ENCODE measurements at regions of chr11 and their contacts with region 1.

Region 1: GRCh38 chr11:57644748-57645688 is 4.7 kb downstream of the YPEL4 start:
- DNase-seq: peak; percentile 90
- ATAC-seq: peak; percentile 83
- H3K4me3 Mint-ChIP-seq: no peak overlapping the region
- H3K27ac Mint-ChIP-seq: no peak overlapping the region
- H3K4me1 Mint-ChIP-seq: peaks cover 33% of the 10 kb centered on the region
- H3K27me3 Mint-ChIP-seq: peaks cover 64% of the 10 kb centered on the region

Region 2: GRCh38 chr11:57546869-57547475 is 98.0 kb before region 1 on chr11:
- CTCF ChIA-PET with region 1: interaction called, 10 read pairs
- DNase-seq: no peak
- ATAC-seq: peak; percentile 61
- H3K4me3 Mint-ChIP-seq: no peak overlapping the region
- H3K27ac Mint-ChIP-seq: peak overlapping the region; percentile 22
- H3K4me1 Mint-ChIP-seq: peaks cover 20% of the 10 kb centered on the region
- H3K27me3 Mint-ChIP-seq: no peaks in the 10 kb centered on the region

Region 3: DNA sequence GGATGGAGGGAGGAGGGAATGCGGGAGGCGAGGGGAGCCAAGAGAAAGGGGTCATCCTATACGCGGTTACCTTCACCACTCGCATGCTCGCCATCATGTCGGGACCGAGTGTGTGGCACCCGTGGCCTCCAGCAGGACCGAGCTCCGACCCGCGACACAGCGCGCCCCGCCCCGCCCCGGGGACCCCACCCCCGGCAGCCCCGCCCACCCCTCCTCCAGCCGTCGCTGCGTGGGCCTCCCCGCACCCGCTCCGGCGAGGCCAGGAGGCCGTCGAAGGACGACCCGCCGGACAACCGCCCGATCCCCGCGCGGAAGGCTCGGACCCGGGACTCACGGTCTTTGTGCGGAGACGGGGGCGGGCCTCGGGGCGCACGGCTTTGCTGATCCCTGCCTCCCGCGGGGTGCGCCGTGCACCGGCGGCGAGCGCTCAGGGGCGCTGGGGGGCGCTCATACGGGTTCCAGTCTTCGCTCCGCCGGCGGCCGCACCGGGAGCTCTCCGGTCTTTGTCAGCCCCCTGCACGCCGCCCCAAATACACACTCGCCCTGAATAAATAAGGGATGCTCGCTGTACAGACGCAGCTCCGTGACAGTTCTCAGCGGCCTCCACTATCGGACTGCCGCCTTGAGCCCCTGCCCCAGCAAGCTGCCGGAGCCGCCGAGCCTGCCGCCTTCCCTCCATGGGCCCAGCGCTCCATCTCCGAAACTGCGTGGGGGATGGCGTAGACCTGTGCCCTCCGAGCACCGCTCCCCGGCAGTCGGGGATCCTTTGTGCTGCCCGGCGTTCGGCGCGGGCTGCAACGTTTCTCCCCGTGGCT is 77.3 kb before region 1 on chr11 and contains the start of gene UBE2L6:
- CTCF ChIA-PET with region 1: interaction called, 267 read pairs
- DNase-seq: peak; percentile 77
- ATAC-seq: peak; percentile 79
- H3K4me3 Mint-ChIP-seq: peak within 1 kb of the TSS; percentile 100
- H3K27ac Mint-ChIP-seq: peak within 1 kb of the TSS; percentile 98
- H3K4me1 Mint-ChIP-seq: peaks cover 30% of the 10 kb centered on the region
- H3K27me3 Mint-ChIP-seq: no peaks in the 10 kb centered on the region
- total RNA-seq, gene UBE2L6: 245 to 317 TPM

Region 4: GRCh38 chr11:57604296-57605027 is 40.6 kb before region 1 on chr11:
- CTCF ChIA-PET with region 1: interaction called, 12 read pairs
- DNase-seq: peak; percentile 44
- ATAC-seq: no peak
- H3K4me3 Mint-ChIP-seq: no peak overlapping the region
- H3K27ac Mint-ChIP-seq: no peak overlapping the region
- H3K4me1 Mint-ChIP-seq: peaks cover 5% of the 10 kb centered on the region
- H3K27me3 Mint-ChIP-seq: peaks cover 34% of the 10 kb centered on the region

Region 5: DNA sequence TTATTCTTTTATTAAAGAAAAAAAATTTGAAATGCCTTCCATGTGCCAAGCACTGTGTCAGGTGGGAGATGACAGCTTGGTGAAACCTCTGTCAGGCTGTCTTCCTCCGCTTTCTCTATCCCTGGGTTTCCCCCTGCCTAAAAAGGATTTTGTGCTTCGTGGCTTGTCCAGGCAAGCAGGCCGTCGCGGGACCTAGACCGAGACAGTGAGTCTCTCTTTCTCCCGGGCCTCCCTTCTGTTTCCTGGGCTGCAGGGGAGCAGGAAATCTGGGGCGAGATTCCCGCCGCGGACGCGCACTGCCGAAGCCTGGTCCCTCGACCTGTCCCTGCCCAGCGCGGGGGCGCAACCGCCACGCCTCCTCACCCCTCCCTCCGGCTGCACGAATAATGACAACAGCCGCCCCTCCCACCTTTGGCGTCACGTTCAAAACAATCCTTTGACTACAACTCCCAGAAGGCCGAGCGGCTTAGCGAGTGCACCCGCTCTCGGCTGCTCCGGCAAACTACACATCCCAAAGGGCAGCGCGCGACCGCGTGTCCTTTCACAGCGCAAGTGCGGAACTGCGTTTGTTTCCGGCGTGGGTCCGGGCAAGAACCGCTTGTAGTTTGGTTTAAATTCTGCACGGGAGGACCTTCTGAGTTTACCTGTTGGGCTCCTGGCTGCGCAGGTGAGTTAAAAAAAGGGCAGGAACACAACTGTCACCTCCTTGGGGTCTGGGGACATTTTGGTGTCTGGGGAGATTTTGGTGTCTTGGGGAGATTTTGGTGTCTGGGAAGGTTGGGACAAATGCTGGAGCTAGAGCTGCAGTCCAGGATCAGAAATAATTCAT is 12.4 kb after region 1 on chr11 and contains the start of gene CLP1:
- CTCF ChIA-PET with region 1: interaction called, 19 read pairs
- DNase-seq: peak; percentile 99
- ATAC-seq: peak; percentile 98
- H3K4me3 Mint-ChIP-seq: peak within 1 kb of the TSS; percentile 94
- H3K27ac Mint-ChIP-seq: peak within 1 kb of the TSS; percentile 93
- H3K4me1 Mint-ChIP-seq: peaks cover 44% of the 10 kb centered on the region
- H3K27me3 Mint-ChIP-seq: no peaks in the 10 kb centered on the region
- total RNA-seq, gene CLP1: 15.7 to 22.6 TPM

Region 6: GRCh38 chr11:57700425-57700824 is 55.4 kb after region 1 on chr11:
- CTCF ChIA-PET with region 1: no interaction called
- DNase-seq: no peak
- ATAC-seq: no peak
- H3K4me3 Mint-ChIP-seq: no peak overlapping the region
- H3K27ac Mint-ChIP-seq: no peak overlapping the region
- H3K4me1 Mint-ChIP-seq: no peaks in the 10 kb centered on the region
- H3K27me3 Mint-ChIP-seq: no peaks in the 10 kb centered on the region